ENCODE measurements at regions of chr12 and their contacts with region 1.

Region 1: DNA sequence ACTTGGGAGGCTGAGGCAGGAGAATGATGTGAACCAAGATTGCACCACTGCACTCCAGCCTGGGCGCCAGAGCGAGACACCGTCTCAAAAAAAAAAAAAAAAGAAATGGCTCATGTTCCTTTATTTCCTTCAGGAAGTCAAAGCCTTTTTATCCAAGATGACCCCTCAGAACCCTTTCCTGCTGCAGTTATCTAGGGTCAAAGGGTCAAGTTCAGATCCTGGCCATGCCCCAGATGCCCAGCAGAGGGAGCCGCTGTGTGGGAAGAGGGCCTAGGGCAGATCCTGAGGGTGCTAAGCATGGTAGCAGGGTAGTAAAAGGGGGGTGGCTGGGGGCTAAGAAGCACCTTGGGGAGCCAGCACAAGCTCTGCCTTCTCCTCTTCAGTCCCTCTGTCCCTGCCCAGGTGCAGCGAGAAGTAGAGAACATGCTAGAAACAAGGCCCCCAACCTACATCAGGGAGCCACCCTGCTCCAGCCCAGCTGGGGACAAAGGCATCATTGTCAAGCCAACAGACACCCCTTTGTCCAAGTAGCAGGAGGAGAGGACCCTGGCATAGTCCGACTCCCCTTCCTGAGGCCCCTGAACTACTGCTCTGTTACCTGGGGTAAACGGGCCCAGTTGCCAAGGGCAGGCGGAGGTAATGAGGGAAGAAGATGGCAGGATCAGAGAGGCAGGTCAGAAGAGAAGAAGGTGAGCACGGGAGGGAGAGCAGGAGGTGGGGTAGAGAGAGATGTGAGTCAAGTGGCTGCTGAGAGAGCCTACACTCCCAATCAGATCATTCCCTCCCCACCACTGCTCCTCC is 6.5 kb downstream of the NFE2 start:
- DNase-seq: peak; percentile 78
- H3K4me3 Mint-ChIP-seq: no peak overlapping the region
- H3K27ac Mint-ChIP-seq: no peak overlapping the region
- H3K4me1 Mint-ChIP-seq: peaks cover 6% of the 10 kb centered on the region
- H3K27me3 Mint-ChIP-seq: peaks cover 51% of the 10 kb centered on the region

Region 2: GRCh38 chr12:54068418-54069070 is 225.8 kb before region 1 on chr12:
- CTCF ChIA-PET with region 1: no interaction called
- DNase-seq: no peak
- H3K4me3 Mint-ChIP-seq: no peak overlapping the region
- H3K27ac Mint-ChIP-seq: no peak overlapping the region
- H3K4me1 Mint-ChIP-seq: no peaks in the 10 kb centered on the region
- H3K27me3 Mint-ChIP-seq: peaks cover 77% of the 10 kb centered on the region

Region 3: DNA sequence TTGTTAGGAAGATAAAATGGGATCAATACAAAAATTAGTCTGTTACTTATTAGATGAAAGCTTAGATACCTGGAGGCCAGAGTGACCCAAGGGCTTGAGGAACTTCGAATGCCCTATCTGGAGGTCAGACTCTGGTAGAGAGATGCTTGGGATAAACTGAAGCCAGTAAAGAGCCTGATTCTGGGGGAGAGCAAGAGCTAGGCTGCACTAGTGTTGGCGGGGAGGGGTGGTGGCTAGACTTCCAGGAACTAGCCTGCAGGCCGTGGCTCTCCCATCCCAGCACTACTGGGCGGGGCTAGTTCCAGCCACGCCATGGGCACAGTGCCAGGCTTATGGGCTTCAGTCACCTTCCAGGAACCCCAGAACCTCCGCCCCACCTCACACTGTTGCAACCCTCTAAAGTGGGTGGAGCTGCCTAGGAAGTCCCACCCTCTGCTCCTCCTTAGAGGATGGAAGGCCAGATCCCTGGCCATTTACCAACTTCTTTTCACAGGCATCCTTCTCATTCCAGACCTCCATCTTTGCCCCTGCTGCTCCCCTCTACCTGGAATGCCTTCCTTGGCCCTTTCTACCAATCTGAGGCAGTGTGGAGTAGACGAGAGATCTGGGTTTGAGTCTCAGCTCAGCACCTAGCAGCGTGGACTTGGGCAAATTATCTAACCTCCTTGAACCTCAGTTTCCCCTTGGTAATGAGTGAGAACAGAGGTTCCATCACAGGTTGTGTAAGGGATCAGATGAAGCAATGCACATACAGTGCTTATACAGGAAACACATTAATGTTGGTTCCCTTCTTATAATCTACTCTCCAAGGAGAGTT is 12.8 kb after region 1 on chr12:
- CTCF ChIA-PET with region 1: interaction called, 13 read pairs
- DNase-seq: peak; percentile 33
- H3K4me3 Mint-ChIP-seq: no peak overlapping the region
- H3K27ac Mint-ChIP-seq: no peak overlapping the region
- H3K4me1 Mint-ChIP-seq: peaks cover 24% of the 10 kb centered on the region
- H3K27me3 Mint-ChIP-seq: peaks cover 81% of the 10 kb centered on the region

Region 4: GRCh38 chr12:54337280-54337842 is 43.0 kb after region 1 on chr12:
- CTCF ChIA-PET with region 1: interaction called, 40 read pairs
- DNase-seq: no peak
- H3K4me3 Mint-ChIP-seq: no peak overlapping the region
- H3K27ac Mint-ChIP-seq: no peak overlapping the region
- H3K4me1 Mint-ChIP-seq: peaks cover 10% of the 10 kb centered on the region
- H3K27me3 Mint-ChIP-seq: no peaks in the 10 kb centered on the region

Region 5: DNA sequence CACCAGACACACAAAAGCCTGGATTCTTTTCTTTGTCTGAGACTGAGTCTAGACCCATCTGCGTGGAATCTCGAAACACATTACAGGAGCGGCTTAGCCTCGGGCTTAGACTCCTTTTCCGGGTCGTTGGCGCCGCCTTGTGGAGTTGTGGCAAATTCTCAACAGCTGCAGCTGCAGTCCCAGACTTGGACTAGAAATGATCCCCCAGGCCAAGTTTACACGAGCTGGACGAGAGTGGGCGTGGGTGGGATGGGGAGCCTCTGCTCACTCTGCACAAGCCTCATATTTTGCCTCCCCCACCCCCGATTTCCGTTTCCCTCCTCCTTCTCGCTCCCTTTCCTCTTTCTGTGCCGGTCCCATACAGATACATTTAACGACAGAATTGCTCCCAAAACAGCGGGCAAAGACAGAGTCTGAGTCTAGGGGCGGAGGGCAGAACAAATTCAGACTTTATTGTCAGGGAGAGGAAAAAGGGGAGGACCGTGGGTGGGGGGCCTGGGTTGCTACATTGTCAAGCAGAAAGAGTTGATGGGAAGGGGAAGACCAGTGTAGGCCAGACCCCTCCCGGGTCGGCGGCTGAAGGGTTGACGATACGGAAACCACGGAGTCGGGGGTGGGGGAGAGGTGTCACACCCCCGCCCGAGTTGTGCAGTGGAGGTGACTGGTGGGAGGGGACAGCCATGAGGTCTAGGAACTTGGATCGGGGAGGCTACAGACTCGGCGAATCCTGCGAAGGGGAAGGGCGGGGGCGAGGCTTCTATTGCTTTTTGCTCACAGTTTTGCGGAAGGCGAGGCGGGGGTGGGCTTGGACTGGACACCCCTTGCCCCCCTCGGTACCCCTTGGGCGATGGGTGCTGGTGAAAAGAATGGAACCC is 74.6 kb after region 1 on chr12:
- CTCF ChIA-PET with region 1: interaction called, 125 read pairs
- DNase-seq: peak; percentile 93
- H3K4me3 Mint-ChIP-seq: peak overlapping the region; percentile 33
- H3K27ac Mint-ChIP-seq: no peak overlapping the region
- H3K4me1 Mint-ChIP-seq: peaks cover 41% of the 10 kb centered on the region
- H3K27me3 Mint-ChIP-seq: peaks cover 33% of the 10 kb centered on the region